Right ventricle myocardium inferior (tissue), 1 donor: ENCODE measurements at regions of chr5 and their contacts with region 1.

Region 1: DNA sequence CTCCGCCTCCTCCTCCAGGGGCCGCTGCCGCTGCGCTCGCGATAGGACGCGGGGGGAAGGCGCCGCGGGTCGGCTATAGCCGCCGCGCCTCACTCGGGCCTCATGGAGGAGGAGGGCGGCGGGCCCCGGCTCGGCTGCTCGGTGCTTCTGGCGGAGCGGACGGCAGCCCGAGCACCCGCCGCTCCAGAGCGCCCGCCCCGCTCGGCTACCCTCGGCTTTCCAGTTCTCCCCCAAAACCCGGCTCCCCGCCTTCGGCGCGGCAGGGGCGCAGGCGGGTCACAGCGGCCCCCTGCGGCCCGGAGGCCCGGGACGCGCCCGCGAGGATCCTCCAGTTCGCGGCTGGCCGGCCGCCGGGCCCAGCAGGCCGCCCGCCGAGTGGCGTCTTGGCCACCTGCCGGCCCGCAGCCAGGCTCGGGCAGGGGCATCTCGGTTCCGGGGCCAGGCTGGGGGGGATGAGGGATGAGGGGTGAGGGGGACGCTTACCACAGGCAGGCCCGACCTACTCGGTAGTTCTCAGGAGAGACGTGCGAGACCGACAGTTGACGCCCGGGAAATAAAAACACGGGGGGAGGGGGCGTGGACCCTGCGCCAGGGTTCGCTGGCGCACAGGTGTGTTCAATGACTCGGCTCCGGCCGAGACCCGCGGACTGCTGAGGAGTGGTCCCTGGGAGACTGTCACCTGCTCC is at the start of gene PAIP1:
- DNase-seq: peak; percentile 91
- ATAC-seq: peak; percentile 92
- total RNA-seq, gene PAIP1: 130 TPM

Region 2: DNA sequence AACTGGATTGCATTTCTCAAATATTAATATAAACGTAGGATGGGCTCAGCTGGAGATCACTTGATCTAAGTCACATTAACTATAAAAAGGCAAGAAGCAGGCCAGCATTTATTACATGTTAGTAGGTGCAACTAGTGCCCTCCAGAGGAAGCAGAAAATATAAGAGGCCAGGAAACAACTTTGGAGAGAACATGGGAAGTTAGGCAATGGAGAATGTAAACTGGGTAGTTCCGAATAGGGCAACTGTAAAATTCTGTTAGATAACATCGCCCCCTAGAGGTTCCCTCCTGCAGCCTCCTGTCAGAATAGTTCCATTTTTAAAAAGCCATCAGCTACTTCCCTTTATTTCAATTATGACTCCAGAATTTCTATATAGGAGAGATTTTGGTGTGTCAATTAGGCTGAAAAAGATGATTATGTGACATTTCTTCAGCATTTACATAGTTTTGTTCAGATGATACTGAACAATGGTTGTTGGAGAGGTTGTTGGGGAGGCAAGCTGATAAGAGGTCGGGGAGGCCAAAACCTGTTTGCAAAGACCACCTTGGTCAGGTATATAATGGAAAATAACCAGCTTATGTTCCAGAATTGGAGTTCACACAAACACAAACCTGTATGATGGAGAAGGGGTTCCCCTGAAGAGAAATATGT is 167.2 kb before region 1 on chr5:
- intact Hi-C with region 1: no loop called
- DNase-seq: no peak
- ATAC-seq: peak; percentile 93

Region 3: GRCh38 chr5:43514816-43515677 is 42.0 kb before region 1 on chr5 and contains the start of gene C5orf34:
- intact Hi-C with region 1: loop called (anchors 5 kb)
- DNase-seq: peak; percentile 98
- ATAC-seq: peak; percentile 100
- total RNA-seq, gene C5orf34: 0.73 TPM

Region 4: DNA sequence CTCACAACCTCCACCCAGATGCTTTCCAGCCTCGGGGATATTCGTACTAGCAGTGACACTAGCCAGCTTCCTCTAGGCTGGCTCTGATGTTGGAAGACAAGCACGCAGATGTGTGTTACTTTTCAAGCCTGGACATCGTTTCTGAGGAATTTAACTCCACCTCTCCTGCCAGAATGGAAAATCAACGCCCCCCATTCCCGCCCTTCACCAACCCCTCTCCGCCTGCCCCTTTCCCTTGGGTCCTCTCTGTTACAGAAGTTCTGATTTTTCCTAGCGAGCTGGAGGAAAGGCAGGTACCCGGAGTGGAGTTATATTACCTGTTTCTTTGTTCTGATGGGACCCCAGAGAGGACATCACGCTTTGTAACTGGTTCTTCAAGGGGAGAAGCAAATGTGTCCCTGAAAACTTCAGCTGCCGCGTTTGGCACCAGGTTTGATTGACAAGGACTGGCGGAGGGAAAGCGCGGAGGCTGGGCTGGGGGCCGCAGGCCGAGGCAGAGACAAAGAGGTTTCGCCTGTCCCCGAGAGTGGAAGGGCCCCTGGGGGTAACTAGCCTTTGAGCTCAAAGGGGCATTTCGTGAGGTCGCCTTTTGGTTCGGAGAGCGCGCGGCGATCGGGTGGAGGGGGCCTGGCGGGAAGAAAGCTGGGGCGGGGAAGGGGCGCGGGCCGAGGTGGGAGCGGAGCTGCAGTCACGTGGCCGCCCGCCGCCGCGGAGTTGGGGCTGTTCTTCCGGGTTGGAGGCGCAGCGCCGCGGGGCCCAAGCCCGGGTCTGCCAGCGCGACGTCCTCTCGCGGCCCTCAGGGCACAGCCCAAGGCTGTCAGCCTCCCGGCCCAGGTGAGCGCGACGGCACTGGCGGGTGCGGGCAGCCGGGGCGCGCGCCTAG is 45.7 kb after region 1 on chr5 and contains the start of gene NNT:
- intact Hi-C with region 1: loop called (anchors 1 kb)
- DNase-seq: peak; percentile 95
- ATAC-seq: peak; percentile 82
- total RNA-seq, gene NNT: 563 TPM

Region 5: DNA sequence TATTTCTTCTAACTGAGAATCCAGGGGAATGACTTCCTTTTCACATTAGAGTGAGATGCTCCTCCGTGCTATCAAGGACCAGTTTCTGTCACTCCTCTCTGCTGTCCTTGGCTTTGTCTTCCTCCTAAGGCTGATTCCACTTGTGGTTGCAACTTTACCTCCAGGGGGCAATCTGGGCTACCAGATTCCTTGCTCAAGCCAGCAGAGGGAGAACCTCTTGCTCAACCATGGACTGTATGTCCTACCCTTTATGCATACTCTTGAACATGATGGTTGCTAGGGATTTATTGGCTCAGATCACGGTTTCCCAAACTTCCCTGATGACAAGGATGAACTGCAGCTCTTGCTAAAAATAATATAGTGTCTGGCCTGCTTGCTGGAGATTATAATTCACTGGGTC is 70.0 kb after region 1 on chr5:
- intact Hi-C with region 1: loop called (anchors 5 kb)
- DNase-seq: no peak
- ATAC-seq: peak; percentile 89

Region 6: DNA sequence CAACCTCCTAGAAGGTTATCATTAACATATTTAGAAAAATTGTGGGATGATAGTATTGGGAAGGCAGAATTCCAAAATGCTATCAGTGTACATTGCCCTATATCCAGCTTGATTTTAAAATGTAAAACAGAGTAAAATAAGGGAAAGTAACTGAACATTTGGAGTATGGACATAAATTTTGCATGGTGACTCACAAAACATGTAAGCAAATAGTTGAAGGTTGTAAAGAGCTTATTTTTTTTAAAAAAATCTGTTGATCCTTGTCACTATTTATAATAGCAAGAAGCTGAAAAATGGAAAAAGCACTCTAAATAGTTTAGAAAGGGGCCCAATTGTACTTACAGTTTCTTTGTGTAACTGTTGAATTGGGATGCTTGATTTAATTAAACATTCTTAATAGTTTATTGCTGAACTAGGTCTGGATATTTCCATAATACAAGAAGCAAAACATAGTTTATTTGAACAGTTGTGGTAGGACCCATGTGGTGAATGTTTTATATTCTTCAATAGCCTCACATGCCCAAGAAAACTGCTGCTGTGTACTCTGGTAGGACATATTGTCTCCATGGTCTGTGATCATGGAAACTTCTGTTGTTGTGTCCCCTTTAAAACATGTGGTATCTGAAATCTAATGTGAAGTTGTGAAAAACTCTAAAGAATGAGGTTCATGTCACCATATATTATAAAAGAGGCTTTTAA is 128.4 kb after region 1 on chr5:
- intact Hi-C with region 1: no loop called
- DNase-seq: no peak
- ATAC-seq: no peak

Region 7: DNA sequence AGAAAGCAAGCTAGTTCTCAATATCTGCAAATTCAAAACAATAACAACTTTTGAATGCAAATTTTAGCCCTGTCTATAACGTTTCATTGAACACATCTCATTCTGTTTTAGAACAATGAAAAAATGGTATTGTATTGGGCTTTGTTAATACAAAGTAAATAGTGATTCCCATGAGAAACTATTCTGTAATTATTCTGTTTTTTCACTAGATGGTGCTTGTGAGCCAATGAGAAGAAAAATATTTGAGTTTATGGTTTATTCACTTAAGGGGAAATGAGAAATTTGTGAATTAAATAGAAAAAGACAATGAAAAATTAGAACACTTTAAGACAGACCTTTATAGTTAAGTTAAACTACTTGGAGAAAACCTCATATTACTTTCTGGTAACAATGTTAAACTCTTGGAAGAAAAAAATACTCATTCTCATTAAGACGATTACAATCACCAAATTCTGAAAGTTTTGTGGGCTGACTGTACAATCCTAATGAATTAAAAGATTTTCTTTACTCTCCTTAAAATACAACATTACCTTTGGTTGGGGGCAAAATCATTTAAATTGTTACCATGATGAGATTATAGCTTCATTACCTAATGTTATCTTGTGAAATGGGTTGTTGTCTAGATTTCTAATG is 173.0 kb after region 1 on chr5:
- intact Hi-C with region 1: no loop called
- DNase-seq: no peak
- ATAC-seq: no peak